Heart right ventricle (tissue), 16 donors: ENCODE measurements at regions of chr5 and their contacts with region 1.

Region 1: GRCh38 chr5:88729084-88729828 is 153.7 kb downstream of the MEF2C start:
- DNase-seq: peak in 1 of 2 donors; percentile 77
- ATAC-seq: peak; percentile 75 to 84 (median 80)
- H3K4me3 ChIP-seq: no peak overlapping the region
- H3K27ac ChIP-seq: peak overlapping the region in 1 of 10 donors; percentile 1
- H3K4me1 ChIP-seq: peaks cover 0 to 59% (median 23%) of the 10 kb centered on the region in 9 donors
- H3K27me3 ChIP-seq: no peaks in the 10 kb centered on the region
- CTCF ChIP-seq: peak; percentile 72 to 90 (median 87)

Region 2: GRCh38 chr5:88826646-88827585 is 97.7 kb after region 1 on chr5:
- intact Hi-C with region 1: loop called in 4 of 10 experiments (anchors 5 to 10 kb)
- DNase-seq: peak; percentile 20 to 84
- ATAC-seq: peak; percentile 83 to 93 (median 89)
- H3K4me3 ChIP-seq: peak overlapping the region in 7 of 10 donors; percentile 0 to 37 (median 27)
- H3K27ac ChIP-seq: peak overlapping the region; percentile 45 to 92 (median 80)
- H3K4me1 ChIP-seq: peaks cover 4 to 99% (median 91%) of the 10 kb centered on the region in 9 donors
- H3K27me3 ChIP-seq: no peaks in the 10 kb centered on the region
- CTCF ChIP-seq: no peak

Region 3: GRCh38 chr5:88883059-88883835 is 154.0 kb after region 1 on chr5 and contains the start of gene MEF2C:
- intact Hi-C with region 1: loop called in 8 of 10 experiments (anchors 2 to 5 kb)
- DNase-seq: peak; percentile 81 to 90
- ATAC-seq: peak; percentile 78 to 92 (median 84)
- H3K4me3 ChIP-seq: peak within 1 kb of the TSS; percentile 54 to 83 (median 70)
- H3K27ac ChIP-seq: peak within 1 kb of the TSS; percentile 71 to 95 (median 91)
- H3K4me1 ChIP-seq: peaks cover 4 to 59% (median 38%) of the 10 kb centered on the region in 9 donors
- H3K27me3 ChIP-seq: no peaks in the 10 kb centered on the region
- CTCF ChIP-seq: no peak
- total RNA-seq, gene MEF2C: 38.8 to 88.7 (median 70.0) TPM

Region 4: DNA sequence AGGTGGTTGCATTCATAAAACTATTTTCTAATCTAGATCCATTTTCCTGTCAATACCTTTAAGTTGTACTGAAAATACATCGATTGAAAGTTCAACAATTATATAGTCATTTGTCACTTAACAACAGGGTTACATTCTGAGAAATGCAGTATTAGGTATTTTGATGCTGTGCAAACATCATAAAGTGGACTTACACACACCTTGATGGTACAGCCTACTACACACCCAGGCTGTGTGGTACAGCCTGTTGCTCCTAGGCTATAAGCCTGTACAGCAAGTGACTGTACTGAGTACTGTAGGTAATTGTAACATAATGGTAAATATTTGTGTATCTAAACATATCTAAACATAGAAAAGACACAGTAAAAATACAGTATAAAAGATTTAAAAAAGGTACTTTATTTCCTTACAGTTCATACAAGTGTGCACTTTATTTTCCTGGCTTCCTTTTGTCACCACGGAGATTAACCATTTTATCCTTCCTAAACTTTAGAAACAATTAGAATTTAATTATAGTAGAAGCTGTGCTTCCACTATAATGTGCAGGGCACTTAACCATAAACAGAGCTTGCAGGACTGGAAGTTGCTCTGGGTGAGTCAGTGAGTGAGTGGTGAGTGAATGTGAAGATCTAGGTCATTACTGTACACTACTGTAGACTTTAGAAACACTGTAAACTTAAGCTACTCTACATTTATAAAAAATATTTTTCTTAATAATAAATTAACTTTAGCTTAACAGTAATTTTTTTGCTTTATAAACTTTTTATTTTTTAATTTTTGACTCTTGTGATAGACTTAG is 196.6 kb after region 1 on chr5:
- intact Hi-C with region 1: no loop called
- DNase-seq: no peak
- ATAC-seq: peak in 1 of 8 donors; percentile 56
- H3K4me3 ChIP-seq: no peak overlapping the region
- H3K27ac ChIP-seq: no peak overlapping the region
- H3K4me1 ChIP-seq: peaks cover 0 to 5% (median 0%) of the 10 kb centered on the region in 9 donors
- H3K27me3 ChIP-seq: no peaks in the 10 kb centered on the region
- CTCF ChIP-seq: no peak

Region 5: GRCh38 chr5:89729623-89730301 is 1000.5 kb after region 1 on chr5:
- intact Hi-C with region 1: loop called in 1 of 10 experiments (anchors 10 kb)
- DNase-seq: no peak
- ATAC-seq: no peak
- H3K4me3 ChIP-seq: no peak overlapping the region
- H3K27ac ChIP-seq: no peak overlapping the region
- H3K4me1 ChIP-seq: peaks cover 0 to 21% (median 7%) of the 10 kb centered on the region in 9 donors
- H3K27me3 ChIP-seq: no peaks in the 10 kb centered on the region
- CTCF ChIP-seq: peak in 4 of 9 donors; percentile 16 to 39 (median 36)

Region 6: GRCh38 chr5:90184764-90185163 is 1455.5 kb after region 1 on chr5:
- intact Hi-C with region 1: loop called in 6 of 10 experiments (anchors 5 to 10 kb)
- DNase-seq: no peak
- ATAC-seq: no peak
- H3K4me3 ChIP-seq: no peak overlapping the region
- H3K27ac ChIP-seq: no peak overlapping the region
- H3K4me1 ChIP-seq: peaks cover 0 to 8% (median 0%) of the 10 kb centered on the region in 9 donors
- H3K27me3 ChIP-seq: no peaks in the 10 kb centered on the region
- CTCF ChIP-seq: no peak

Region 7: DNA sequence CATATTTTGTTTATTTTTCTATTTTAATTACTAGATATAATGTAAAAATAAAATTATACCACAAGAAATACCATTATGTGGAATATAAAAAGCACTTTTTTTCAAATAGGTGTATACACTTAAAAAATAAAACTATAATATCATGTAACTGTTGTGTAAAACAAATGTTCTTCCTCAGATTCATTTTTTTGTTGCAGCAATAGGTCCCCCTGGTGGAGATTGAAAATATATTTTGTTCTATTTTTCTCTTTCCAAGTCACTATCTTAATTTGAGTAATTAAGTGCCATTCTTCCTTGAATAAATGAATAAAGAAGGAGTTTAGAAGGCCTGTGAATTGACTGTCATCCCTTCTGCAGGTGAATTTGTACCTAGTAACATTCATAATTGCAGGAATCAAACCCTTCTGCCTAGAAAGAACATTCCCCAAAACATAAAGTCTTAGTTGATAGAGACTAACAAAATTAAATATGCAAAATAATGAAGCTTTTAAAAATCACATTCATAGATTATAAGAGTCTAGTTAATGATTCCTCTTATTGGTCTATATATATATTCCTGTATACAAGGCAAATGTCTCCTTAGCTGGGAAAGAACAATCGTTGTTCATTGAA is 1656.9 kb after region 1 on chr5:
- intact Hi-C with region 1: loop called in 2 of 10 experiments (anchors 5 to 10 kb)
- DNase-seq: no peak
- ATAC-seq: no peak
- H3K4me3 ChIP-seq: no peak overlapping the region
- H3K27ac ChIP-seq: no peak overlapping the region
- H3K4me1 ChIP-seq: peaks cover 0 to 12% (median 0%) of the 10 kb centered on the region in 9 donors
- H3K27me3 ChIP-seq: no peaks in the 10 kb centered on the region
- CTCF ChIP-seq: peak in 8 of 9 donors; percentile 12 to 63 (median 54)